Sciatic nerve (tissue), 2 donors: ENCODE measurements at regions of chr11 and their contacts with region 1.

Region 1: GRCh38 chr11:27786331-27786730 is 86.1 kb upstream of the BDNF start:
- DNase-seq: no peak
- ATAC-seq: no peak

Region 2: DNA sequence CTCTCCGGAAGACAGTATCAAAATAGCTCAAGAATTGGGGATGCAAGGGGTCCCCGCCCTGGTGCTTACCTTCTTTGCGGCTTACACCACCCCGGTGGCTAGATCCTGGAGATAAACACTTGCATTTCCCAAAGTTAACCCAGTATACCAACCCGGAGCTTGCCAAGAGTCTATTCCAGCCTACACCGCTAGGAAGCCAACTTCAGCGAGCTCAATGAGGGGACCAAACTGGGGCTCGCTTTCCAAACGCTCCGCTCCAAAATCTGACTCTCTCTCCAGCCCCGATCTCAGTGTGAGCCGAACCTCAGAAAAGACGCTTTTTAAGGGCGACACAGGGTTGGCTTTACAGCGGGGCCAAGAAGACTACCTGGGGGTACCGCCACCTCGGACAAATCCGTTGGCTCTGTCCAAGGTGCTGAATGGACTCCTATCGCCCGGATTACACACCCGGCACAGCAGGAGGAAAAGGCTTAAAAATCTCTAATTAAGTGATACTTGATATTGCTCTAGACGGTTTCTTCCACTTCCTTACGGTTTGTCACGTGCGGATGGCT is 66.0 kb before region 1 on chr11:
- intact Hi-C with region 1: no loop called
- DNase-seq: no peak
- ATAC-seq: no peak

Region 3: DNA sequence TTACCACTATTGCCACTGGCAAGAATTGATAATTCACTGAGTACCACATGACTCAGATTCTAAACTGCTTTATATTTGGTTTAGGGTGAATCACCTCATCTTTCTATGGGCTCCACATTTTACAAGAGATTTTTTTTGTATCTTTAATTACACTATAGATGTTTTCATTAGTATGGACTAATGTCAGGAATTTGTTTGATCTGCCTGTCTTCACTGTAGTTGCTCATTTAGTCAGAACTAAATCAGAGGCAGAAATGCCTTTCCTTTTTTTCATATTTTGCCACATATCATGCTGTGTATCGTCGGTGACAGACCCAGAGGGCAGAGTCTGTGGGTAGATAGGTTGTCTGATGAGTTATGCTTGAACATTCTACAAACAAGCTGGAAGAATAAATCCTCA is 846.0 kb after region 1 on chr11:
- intact Hi-C with region 1: loop called (anchors 5 kb)
- DNase-seq: no peak
- ATAC-seq: no peak